ENCODE measurements at regions of chr11 and their contacts with region 1.

Region 1: GRCh38 chr11:120248551-120249278 is 8.8 kb downstream of the POU2F3 start:
- DNase-seq: peak; percentile 32
- ATAC-seq: peak; percentile 92
- H3K4me3 Mint-ChIP-seq: peak overlapping the region; percentile 70
- H3K27ac Mint-ChIP-seq: peak overlapping the region; percentile 78
- H3K4me1 Mint-ChIP-seq: peaks cover 63% of the 10 kb centered on the region
- H3K27me3 Mint-ChIP-seq: peaks cover 54% of the 10 kb centered on the region

Region 2: GRCh38 chr11:120235024-120235861 is 13.5 kb before region 1 on chr11:
- CTCF ChIA-PET with region 1: interaction called, 75 read pairs
- POLR2A ChIA-PET with region 1: interaction called, 3 read pairs
- DNase-seq: peak; percentile 78
- ATAC-seq: peak; percentile 82
- H3K4me3 Mint-ChIP-seq: no peak overlapping the region
- H3K27ac Mint-ChIP-seq: no peak overlapping the region
- H3K4me1 Mint-ChIP-seq: peaks cover 5% of the 10 kb centered on the region
- H3K27me3 Mint-ChIP-seq: peaks cover 53% of the 10 kb centered on the region

Region 3: GRCh38 chr11:120316842-120317688 is 68.3 kb after region 1 on chr11:
- CTCF ChIA-PET with region 1: no interaction called
- POLR2A ChIA-PET with region 1: no interaction called
- DNase-seq: no peak
- ATAC-seq: no peak
- H3K4me3 Mint-ChIP-seq: no peak overlapping the region
- H3K27ac Mint-ChIP-seq: no peak overlapping the region
- H3K4me1 Mint-ChIP-seq: no peaks in the 10 kb centered on the region
- H3K27me3 Mint-ChIP-seq: peaks cover 36% of the 10 kb centered on the region